Mucosa of descending colon (tissue), 3 donors: ENCODE measurements at regions of chr17 and their contacts with region 1.

Region 1: GRCh38 chr17:2054512-2055291 is at the start of gene HIC1:
- DNase-seq: peak; percentile 80 to 86 (median 85)
- ATAC-seq: peak; percentile 68
- H3K4me3 ChIP-seq: peak within 1 kb of the TSS; percentile 25
- H3K4me1 ChIP-seq: peaks cover 53% of the 10 kb centered on the region
- CTCF ChIP-seq: peak; percentile 93
- total RNA-seq, gene HIC1: 6.0 to 28.9 (median 13.5) TPM

Region 2: DNA sequence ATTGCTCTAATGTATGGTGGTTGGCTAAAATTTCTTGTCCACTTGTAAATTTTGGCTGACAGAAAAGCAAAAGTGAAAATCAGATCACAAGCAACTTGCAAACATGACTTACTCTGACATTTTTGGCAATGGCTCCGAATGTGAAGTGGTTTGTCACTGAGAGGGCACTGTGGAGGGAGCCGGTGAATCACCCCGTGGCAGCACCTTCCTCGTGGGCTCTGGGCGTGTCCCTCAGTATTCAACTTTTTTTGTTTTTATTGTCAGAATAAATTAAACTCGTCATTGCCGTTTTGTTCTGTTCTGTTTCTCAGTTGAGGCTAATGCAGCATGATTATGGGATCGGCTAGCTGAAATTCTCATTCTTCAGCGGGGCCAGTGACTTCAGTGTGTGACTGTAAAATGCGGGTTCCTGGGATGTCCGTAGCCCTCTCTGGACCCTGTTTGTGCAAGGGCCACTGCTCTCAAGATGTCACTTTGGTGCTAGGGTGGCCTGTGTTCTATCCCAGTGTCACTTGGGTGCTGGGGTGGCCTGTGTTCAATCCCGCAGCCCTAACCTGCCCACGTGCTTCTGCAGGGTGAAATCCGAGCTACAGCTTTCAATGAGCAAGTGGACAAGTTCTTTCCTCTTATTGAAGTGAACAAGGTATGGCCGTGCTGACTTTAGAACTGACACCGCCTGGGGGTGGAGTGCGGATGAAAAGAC is 176.1 kb before region 1 on chr17:
- intact Hi-C with region 1: no loop called
- DNase-seq: no peak
- ATAC-seq: no peak
- H3K4me3 ChIP-seq: no peak overlapping the region
- H3K4me1 ChIP-seq: no peaks in the 10 kb centered on the region
- CTCF ChIP-seq: no peak

Region 3: DNA sequence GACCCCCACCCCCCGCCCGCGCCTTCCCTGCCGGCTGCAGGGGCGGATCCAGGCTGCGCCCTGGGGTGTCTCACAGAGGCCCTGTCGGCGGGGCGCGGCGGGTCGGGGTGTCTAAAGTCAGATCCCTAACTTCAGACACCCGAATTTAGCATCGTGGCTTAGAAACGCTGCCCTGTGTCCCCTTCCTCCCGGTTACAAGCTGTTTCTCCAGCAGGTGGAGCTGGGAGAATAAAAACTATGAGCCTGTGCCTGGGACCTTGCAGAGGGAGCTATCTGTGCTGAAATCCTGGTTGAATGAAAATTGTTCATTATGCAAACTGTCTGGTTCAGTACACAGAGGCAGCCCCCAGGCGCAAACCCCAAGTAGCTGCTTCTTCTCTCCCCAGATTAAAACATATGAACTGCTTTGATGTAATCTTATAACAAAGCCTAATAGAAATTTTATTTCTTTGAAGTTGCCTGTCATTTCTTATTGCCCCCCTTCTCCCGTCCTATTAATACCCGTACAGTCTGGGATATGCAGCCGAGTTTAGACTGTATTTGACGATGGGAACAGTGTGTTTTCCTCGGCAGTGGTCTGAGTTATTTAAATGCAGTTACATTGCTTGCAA is 145.9 kb before region 1 on chr17:
- intact Hi-C with region 1: no loop called
- DNase-seq: peak; percentile 33 to 79 (median 45)
- ATAC-seq: peak; percentile 79
- H3K4me3 ChIP-seq: no peak overlapping the region
- H3K4me1 ChIP-seq: peaks cover 12% of the 10 kb centered on the region
- CTCF ChIP-seq: peak; percentile 31

Region 4: GRCh38 chr17:1999557-2000251 is 55.0 kb before region 1 on chr17:
- intact Hi-C with region 1: no loop called
- DNase-seq: peak; percentile 66 to 76 (median 73)
- ATAC-seq: peak; percentile 83
- H3K4me3 ChIP-seq: no peak overlapping the region
- H3K4me1 ChIP-seq: peaks cover 23% of the 10 kb centered on the region
- CTCF ChIP-seq: no peak

Region 5: DNA sequence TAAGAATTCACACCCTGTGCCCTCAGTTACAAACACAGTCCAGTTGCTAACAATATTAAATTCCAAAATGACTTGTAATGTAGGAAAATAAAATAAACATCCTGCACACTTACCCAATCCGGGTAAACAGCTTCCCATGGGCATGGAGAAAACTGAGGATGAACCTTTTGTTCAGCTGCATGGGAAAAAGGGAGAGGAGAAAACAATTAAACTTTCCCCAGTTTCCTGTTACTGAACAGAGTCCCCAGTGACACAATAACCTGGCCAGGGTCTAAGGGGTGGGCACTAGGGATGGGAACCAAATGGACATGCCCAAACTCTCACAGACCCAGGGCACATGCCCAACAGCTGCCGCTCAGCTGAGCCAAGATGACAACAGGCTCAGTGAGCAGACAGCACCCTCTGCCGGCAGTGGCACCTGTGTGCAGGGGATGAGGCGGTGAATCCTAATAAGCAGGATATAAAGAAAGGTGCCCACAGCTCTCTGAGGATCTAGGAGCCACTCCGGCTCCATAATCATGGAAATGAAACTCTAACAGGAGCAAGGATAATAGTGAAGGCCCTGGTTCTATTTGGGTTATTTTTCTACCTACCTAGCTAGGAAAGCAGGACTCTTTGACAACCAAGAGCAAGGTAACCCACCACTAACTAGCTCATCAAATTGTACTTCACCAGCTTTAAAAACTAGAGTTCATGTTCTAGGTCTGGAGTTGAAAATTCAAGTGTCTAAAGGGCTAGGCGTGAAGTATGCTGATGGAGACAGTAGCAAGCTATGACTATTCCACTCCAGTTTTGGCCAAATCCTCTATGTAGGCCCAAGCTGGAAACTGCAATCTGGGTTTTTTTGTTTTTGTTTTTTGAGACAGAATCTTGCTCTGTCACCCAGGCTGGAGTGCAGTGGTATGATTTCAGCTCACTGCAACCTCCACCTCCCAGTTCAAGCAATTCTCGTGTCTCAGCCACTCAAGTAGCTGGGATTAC is 190.1 kb after region 1 on chr17:
- intact Hi-C with region 1: loop called (anchors 2 to 5 kb)
- DNase-seq: peak; percentile 87 to 89 (median 88)
- ATAC-seq: peak; percentile 97
- H3K4me3 ChIP-seq: no peak overlapping the region
- H3K4me1 ChIP-seq: no peaks in the 10 kb centered on the region
- CTCF ChIP-seq: peak; percentile 93

Region 6: DNA sequence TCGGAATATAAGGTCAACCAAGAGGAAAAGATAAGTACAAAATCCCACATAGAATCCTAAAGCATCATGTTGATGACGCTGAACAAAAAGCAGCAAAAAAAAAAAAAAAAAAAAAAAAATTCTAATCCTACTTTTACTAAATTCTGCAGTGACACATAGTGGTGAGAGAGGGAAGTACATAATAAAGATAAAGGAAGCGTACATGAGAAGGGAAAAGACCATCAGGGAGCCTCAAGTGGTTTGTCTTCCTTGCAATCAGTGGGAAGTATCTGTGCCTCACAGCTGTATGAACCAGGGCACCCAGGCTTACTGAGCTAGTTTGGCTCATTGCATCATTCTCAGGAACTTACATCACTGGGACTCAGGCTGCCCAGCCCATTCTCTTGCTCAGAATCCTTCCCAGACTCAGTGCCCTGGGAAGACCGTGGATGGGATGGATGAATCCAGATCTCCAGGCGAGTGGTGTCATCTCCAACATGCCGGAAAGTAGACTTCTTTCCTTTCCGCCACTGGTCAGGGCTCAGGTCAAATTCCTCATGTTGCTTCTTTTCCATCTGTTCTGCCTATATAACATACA is 227.7 kb after region 1 on chr17:
- intact Hi-C with region 1: loop called in 1 of 2 experiments (anchors 10 kb)
- DNase-seq: no peak
- ATAC-seq: peak; percentile 70
- H3K4me3 ChIP-seq: no peak overlapping the region
- H3K4me1 ChIP-seq: no peaks in the 10 kb centered on the region
- CTCF ChIP-seq: no peak